ENCODE measurements at regions of chr6 and their contacts with region 1.

Region 1: GRCh38 chr6:42928986-42929820 is at the start of gene CNPY3:
- DNase-seq: peak; percentile 97 to 98
- ATAC-seq: peak; percentile 97
- H3K4me3 ChIP-seq: peak within 1 kb of the TSS; percentile 20 to 65
- H3K27ac ChIP-seq: peak within 1 kb of the TSS; percentile 34 to 88
- H3K4me1 ChIP-seq: no peaks in the 10 kb centered on the region
- H3K27me3 ChIP-seq: no peaks in the 10 kb centered on the region
- total RNA-seq, gene CNPY3: 28.8 to 50.1 TPM

Region 2: GRCh38 chr6:42978839-42979522 is 49.8 kb after region 1 on chr6 and contains the start of gene PEX6:
- intact Hi-C with region 1: loop called in 1 of 2 experiments (anchors 5 kb)
- DNase-seq: peak; percentile 95 to 97
- ATAC-seq: peak; percentile 94
- H3K4me3 ChIP-seq: peak within 1 kb of the TSS; percentile 66 to 80
- H3K27ac ChIP-seq: peak within 1 kb of the TSS; percentile 72 to 83
- H3K4me1 ChIP-seq: no peaks in the 10 kb centered on the region
- H3K27me3 ChIP-seq: no peaks in the 10 kb centered on the region
- total RNA-seq, gene PEX6: 11.7 to 16.1 TPM

Region 3: GRCh38 chr6:43007126-43007525 is 77.9 kb after region 1 on chr6:
- intact Hi-C with region 1: no loop called
- DNase-seq: no peak
- ATAC-seq: no peak
- H3K4me3 ChIP-seq: no peak overlapping the region
- H3K27ac ChIP-seq: no peak overlapping the region
- H3K4me1 ChIP-seq: no peaks in the 10 kb centered on the region
- H3K27me3 ChIP-seq: no peaks in the 10 kb centered on the region

Region 4: DNA sequence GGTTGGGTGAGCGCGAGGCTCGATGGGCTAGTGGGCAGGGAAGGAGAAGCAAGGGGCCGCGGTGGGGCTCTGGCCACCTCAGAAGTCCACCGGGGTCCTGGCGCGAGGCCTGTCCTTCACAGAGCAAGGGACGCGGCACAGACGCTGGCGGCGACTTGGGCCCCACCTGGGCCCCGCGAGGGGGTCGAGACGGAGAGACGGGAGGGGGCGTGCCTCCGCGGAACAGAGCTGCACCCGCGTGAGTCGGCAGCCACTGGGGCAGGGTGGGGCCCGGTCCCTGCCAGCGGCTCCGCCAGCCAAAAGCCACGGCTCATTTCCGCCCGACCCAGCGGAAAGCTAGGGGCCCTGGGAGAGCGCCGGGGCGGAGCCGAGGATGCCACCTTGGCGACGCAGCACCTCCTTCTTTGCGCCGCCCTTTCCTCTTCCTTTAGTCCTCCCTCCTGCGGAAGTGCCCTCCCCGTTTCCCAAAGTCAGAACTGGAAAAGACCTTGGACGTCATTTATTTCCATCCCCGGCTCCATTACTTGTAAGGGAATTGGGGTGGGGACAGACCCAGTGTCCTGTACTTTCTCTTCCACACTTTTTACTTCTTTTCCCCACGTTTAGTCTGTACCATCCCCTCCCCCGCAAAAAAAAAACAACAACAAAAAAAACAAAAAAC is 124.5 kb after region 1 on chr6 and contains the start of gene CUL7:
- intact Hi-C with region 1: loop called in 1 of 2 experiments (anchors 5 kb)
- DNase-seq: peak; percentile 96 to 98
- ATAC-seq: peak; percentile 94
- H3K4me3 ChIP-seq: peak within 1 kb of the TSS; percentile 52 to 61
- H3K27ac ChIP-seq: peak within 1 kb of the TSS in 1 of 2 donors; percentile 82
- H3K4me1 ChIP-seq: no peaks in the 10 kb centered on the region
- H3K27me3 ChIP-seq: no peaks in the 10 kb centered on the region
- total RNA-seq, gene CUL7: 11.0 to 17.5 TPM

Region 5: DNA sequence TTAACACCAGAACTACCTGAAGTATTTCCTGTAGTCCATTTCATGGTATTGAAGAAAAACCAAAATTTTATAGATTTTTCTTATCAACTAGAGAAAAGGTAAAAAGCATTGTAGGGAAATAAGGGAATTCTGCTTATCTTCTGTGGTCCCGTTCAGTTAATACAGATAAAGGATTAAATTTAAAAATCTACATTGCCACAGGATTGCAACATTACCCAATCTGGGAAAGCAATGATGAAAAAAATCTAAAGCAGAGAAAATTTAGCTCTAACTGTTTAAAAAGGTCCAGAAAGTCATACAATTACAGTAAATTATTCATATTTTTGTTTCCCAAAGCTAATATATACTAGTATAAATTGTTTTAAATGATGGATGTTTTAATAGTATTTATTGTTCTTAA is 664.7 kb after region 1 on chr6:
- intact Hi-C with region 1: no loop called
- DNase-seq: no peak
- ATAC-seq: no peak
- H3K4me3 ChIP-seq: no peak overlapping the region
- H3K27ac ChIP-seq: no peak overlapping the region
- H3K4me1 ChIP-seq: no peaks in the 10 kb centered on the region
- H3K27me3 ChIP-seq: no peaks in the 10 kb centered on the region

Measured in aorta (tissue), 5 donors.